Esophagus muscularis mucosa (tissue), 4 donors: ENCODE measurements at regions of chr10 and their contacts with region 1.

Region 1: DNA sequence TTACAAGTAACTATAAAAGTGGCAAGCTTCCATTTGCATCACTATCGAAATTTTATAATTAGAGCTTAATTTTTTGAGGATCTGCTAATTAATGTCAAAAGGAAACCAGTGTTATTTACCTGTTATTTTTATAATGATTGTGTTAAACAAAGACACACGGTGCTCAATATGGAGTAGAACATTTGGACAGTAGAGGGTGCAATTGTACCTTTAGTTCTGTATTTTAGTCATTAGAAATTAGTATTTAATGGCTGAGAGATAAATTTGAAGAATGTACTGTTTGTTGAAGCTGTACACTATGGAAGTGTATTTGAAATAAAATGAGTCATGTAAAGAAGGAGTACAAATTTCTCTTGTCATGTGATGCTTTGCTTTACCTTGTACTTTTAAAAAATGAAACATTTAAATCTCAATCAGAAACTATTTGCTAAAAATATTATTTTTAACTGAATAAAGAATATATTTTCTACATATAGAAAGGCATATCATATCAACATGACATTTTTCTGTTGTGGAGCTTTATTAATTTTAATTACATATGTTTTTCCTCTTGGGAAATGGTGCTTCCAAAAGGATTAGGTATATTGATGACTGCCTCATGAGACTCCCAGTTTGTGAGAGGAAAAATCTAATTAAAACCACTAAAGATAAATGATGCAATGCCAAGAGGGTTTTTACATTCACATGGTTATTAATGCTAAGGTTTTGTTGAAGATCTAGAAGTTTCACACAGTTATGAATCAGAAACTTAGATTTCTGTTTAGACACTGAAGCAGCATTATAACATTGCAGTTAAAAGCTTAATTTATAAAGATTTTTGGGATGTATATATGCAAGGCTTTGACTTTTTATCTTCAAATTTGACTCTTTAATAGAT is 10.4 kb upstream of the PRKG1 start:
- DNase-seq: no peak
- H3K4me3 ChIP-seq: no peak overlapping the region
- H3K27ac ChIP-seq: no peak overlapping the region
- H3K4me1 ChIP-seq: peaks cover 0 to 4% (median 0%) of the 10 kb centered on the region in 4 donors
- H3K27me3 ChIP-seq: no peaks in the 10 kb centered on the region
- CTCF ChIP-seq: peak; percentile 62 to 73 (median 63)
- EP300 ChIP-seq: no peak
- POLR2A ChIP-seq: no peak

Region 2: GRCh38 chr10:51368939-51369338 is 305.0 kb after region 1 on chr10:
- intact Hi-C with region 1: no loop called
- DNase-seq: no peak
- H3K4me3 ChIP-seq: no peak overlapping the region
- H3K27ac ChIP-seq: no peak overlapping the region
- H3K4me1 ChIP-seq: peaks cover 6 to 31% (median 16%) of the 10 kb centered on the region in 4 donors
- H3K27me3 ChIP-seq: no peaks in the 10 kb centered on the region
- CTCF ChIP-seq: no peak
- EP300 ChIP-seq: no peak
- POLR2A ChIP-seq: no peak

Region 3: GRCh38 chr10:51699475-51700227 is 635.8 kb after region 1 on chr10 and contains the start of gene CSTF2T:
- intact Hi-C with region 1: loop called (anchors 10 kb)
- DNase-seq: peak; percentile 96
- H3K4me3 ChIP-seq: peak within 1 kb of the TSS; percentile 73 to 85 (median 81)
- H3K27ac ChIP-seq: peak within 1 kb of the TSS; percentile 82 to 93 (median 88)
- H3K4me1 ChIP-seq: peaks cover 42 to 50% (median 43%) of the 10 kb centered on the region in 4 donors
- H3K27me3 ChIP-seq: no peaks in the 10 kb centered on the region
- CTCF ChIP-seq: no peak
- EP300 ChIP-seq: peak; percentile 28
- POLR2A ChIP-seq: peak; percentile 54
- total RNA-seq, gene CSTF2T: 18.3 to 35.1 (median 25.5) TPM

Region 4: GRCh38 chr10:52004342-52004949 is 940.5 kb after region 1 on chr10:
- intact Hi-C with region 1: loop called (anchors 10 kb)
- DNase-seq: no peak
- H3K4me3 ChIP-seq: no peak overlapping the region
- H3K27ac ChIP-seq: no peak overlapping the region
- H3K4me1 ChIP-seq: no peaks in the 10 kb centered on the region
- H3K27me3 ChIP-seq: no peaks in the 10 kb centered on the region
- CTCF ChIP-seq: peak; percentile 43 to 59 (median 52)
- EP300 ChIP-seq: no peak
- POLR2A ChIP-seq: no peak